ENCODE measurements at regions of chr9 and their contacts with region 1.

Region 1: GRCh38 chr9:131046581-131047202 is 37.7 kb downstream of the LAMC3 start:
- DNase-seq: peak; percentile 67 to 86
- H3K4me3 ChIP-seq: peak overlapping the region in 1 of 4 donors; percentile 13
- H3K27ac ChIP-seq: no peak overlapping the region
- H3K4me1 ChIP-seq: peaks cover 0 to 7% (median 6%) of the 10 kb centered on the region in 4 donors
- H3K27me3 ChIP-seq: peaks cover 0 to 21% (median 3%) of the 10 kb centered on the region in 3 donors
- CTCF ChIP-seq: peak in 5 of 7 experiments; percentile 68 to 86 (median 80)
- EP300 ChIP-seq: no peak
- POLR2A ChIP-seq: no peak

Region 2: GRCh38 chr9:130701056-130702022 is 345.4 kb before region 1 on chr9:
- intact Hi-C with region 1: loop called (anchors 10 kb)
- DNase-seq: peak; percentile 82 to 90
- H3K4me3 ChIP-seq: no peak overlapping the region
- H3K27ac ChIP-seq: peak overlapping the region in 1 of 5 donors; percentile 1
- H3K4me1 ChIP-seq: peaks cover 0 to 24% (median 11%) of the 10 kb centered on the region in 4 donors
- H3K27me3 ChIP-seq: no peaks in the 10 kb centered on the region
- CTCF ChIP-seq: peak in 5 of 7 experiments; percentile 74 to 90 (median 84)
- EP300 ChIP-seq: no peak
- POLR2A ChIP-seq: no peak

Region 3: DNA sequence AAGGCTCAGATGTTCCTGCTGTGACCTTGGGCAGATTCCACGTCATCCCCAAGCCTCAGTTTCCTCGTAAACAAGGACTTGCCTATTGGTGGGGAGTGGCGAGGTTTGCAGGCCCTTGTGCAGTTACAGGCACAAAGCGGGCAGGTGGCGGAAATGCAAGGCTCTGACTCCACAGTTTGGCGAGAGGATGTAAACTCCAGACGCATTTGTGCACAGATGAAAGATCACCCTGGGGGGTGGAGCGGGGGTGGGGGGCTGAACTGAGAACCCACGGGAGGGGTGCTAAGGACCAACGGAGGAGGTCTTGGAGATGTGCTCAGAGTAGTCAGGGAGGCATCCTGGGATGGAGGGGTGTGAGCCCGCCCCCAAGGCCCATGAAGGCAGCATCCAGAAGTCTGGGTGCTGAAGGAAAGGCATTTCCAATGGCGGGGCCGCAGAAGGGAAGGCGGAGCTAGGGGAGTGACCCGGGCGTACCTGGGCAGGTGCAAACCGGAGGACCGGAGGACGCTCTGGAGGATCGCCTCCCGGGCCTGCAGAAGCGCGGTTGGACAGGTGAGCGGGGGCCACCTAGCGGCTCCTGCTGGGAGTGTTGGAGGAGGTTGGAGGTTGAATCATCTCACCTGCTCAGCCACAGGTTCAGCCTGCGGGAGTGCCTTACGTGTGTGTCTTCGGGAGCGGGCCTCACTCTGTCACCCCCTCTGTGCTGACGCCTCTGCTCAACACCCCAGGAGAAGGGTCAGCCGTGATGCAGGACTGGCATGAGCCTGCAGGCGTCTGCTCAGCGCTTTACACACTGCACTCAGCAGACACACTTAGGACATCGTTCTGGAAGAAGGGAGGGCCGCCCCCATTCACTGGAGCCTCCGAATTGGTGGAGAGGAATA is 105.8 kb before region 1 on chr9:
- intact Hi-C with region 1: no loop called
- DNase-seq: peak; percentile 89
- H3K4me3 ChIP-seq: no peak overlapping the region
- H3K27ac ChIP-seq: no peak overlapping the region
- H3K4me1 ChIP-seq: peaks cover 21 to 43% (median 36%) of the 10 kb centered on the region in 4 donors
- H3K27me3 ChIP-seq: peaks cover 20 to 83% (median 74%) of the 10 kb centered on the region in 3 donors
- CTCF ChIP-seq: peak in 5 of 7 experiments; percentile 70 to 87 (median 78)
- EP300 ChIP-seq: no peak
- POLR2A ChIP-seq: no peak

Region 4: GRCh38 chr9:131334629-131335367 is 288.1 kb after region 1 on chr9:
- intact Hi-C with region 1: loop called (anchors 10 kb)
- DNase-seq: peak in 1 of 2 donors; percentile 41
- H3K4me3 ChIP-seq: no peak overlapping the region
- H3K27ac ChIP-seq: no peak overlapping the region
- H3K4me1 ChIP-seq: peaks cover 0 to 3% (median 0%) of the 10 kb centered on the region in 4 donors
- H3K27me3 ChIP-seq: no peaks in the 10 kb centered on the region
- CTCF ChIP-seq: no peak
- EP300 ChIP-seq: no peak
- POLR2A ChIP-seq: no peak